ENCODE measurements at regions of chr12 and their contacts with region 1.

Region 1: DNA sequence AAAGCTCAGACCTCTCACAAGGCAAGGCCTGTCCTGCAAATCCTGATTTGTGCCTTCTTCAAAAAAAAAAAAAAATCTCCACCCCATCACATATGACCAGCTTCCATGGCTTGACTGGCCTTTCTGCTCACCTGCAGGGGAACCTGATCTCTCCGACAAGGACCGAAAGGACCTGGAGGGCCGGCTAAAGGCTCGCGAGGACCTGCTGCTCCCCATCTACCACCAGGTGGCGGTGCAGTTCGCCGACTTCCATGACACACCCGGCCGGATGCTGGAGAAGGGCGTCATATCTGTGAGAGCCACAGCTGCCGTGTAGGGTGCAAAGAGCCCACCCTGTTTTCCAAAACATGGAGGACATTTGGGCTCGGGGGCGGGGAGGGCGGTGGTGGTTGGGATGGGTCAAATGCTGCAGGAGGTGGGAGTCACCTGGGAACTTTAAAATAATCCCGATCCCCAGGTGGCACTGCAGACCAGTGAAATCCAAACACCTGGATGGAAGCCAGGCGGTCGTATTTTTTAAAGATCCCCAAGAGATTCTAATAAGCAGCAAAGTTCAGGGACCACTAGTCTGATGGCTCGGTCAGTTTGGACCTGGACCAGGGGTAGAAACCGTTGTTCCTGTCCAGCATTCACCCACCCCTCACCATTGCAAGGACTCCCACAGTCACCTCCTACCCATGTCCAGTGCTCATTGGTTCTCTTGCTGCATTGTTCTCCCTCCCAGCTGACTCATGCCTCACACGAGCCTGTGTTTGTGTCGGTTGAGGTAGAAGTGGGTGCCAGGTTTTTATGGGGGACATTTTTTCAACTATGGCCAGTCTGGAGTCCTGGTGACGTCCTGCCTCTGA is 44.8 kb downstream of the FOXN4 start:
- DNase-seq: peak; percentile 85
- H3K27ac ChIP-seq: no peak overlapping the region
- CTCF ChIP-seq: peak; percentile 89

Region 2: GRCh38 chr12:109277899-109278762 is 13.8 kb after region 1 on chr12:
- CTCF ChIA-PET with region 1: interaction called, 15 read pairs
- POLR2A ChIA-PET with region 1: no interaction called
- DNase-seq: peak; percentile 14
- H3K27ac ChIP-seq: no peak overlapping the region
- CTCF ChIP-seq: no peak

Region 3: DNA sequence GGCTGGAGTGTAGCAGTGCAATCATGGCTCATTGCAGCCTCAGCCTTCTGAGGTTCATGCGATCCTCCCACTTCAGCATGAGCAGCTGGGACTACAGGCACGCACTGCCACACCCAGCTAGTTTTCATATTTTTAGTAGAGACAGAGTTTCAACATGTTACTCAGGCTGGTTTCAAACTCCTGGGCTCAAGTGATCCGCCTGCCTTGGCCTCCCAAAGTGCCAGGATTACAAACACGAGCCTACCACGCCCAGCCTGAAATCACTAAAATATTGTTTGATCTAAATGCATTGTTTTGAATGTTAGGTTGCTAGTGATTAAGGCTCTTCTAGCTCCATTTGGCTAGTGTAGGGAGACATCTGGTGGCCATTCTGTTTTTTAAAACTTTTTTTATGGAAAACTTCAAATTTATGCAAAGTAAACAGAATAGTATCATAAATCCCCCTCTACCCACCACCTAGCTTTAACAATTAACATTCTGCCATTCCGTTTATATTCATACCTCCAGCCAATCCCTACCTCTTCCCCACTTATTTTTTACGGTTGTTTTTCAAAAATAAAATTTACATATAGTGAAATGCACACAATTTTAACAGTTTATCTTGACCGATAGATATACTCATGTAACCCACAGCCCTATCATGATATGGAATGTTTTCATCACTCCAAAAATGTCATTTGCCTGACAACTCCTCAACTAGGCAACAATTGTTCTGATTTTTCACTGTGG is 121.2 kb after region 1 on chr12:
- CTCF ChIA-PET with region 1: interaction called, 33 read pairs
- POLR2A ChIA-PET with region 1: no interaction called
- DNase-seq: peak; percentile 56
- H3K27ac ChIP-seq: peak overlapping the region; percentile 61
- CTCF ChIP-seq: peak; percentile 53